Upper lobe of right lung (tissue), 1 donor: ENCODE measurements at regions of chr1 and their contacts with region 1.

Region 1: GRCh38 chr1:156445789-156446263 is 54.7 kb downstream of the MEF2D start:
- DNase-seq: peak; percentile 87
- ATAC-seq: peak; percentile 98
- H3K4me3 ChIP-seq: no peak overlapping the region
- H3K27ac ChIP-seq: no peak overlapping the region
- H3K4me1 ChIP-seq: no peaks in the 10 kb centered on the region
- H3K27me3 ChIP-seq: peaks cover 45% of the 10 kb centered on the region
- CTCF ChIP-seq: peak; percentile 98

Region 2: DNA sequence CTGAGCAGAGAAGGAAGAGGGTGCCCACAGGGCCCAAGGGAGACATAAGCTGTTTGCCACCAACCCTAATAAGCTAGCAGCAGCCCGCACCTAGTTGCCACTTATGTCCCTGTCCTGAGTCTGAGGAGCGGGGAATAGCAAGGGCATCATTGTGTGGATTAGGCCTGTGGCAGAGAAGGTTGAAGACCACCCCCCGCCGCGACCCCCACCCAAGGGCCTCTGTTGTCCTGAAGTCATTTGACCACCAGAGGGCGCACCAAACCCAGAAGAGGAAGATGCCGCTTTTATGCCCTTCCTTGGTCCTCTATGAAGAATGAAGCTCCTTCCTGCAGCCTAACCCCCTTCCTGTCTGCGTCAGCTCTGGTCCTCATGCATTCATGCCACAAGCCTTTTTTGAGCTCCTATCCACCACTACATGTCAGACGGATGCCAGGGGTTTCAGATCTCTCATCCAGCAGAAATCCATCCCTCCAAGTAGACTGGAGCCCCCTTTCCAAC is 60.2 kb before region 1 on chr1:
- intact Hi-C with region 1: loop called (anchors 2 kb)
- DNase-seq: no peak
- ATAC-seq: peak; percentile 63
- H3K4me3 ChIP-seq: no peak overlapping the region
- H3K27ac ChIP-seq: no peak overlapping the region
- H3K4me1 ChIP-seq: peaks cover 2% of the 10 kb centered on the region
- H3K27me3 ChIP-seq: peaks cover 39% of the 10 kb centered on the region
- CTCF ChIP-seq: peak; percentile 89